ENCODE measurements at regions of chr1 and their contacts with region 1.

Region 1: DNA sequence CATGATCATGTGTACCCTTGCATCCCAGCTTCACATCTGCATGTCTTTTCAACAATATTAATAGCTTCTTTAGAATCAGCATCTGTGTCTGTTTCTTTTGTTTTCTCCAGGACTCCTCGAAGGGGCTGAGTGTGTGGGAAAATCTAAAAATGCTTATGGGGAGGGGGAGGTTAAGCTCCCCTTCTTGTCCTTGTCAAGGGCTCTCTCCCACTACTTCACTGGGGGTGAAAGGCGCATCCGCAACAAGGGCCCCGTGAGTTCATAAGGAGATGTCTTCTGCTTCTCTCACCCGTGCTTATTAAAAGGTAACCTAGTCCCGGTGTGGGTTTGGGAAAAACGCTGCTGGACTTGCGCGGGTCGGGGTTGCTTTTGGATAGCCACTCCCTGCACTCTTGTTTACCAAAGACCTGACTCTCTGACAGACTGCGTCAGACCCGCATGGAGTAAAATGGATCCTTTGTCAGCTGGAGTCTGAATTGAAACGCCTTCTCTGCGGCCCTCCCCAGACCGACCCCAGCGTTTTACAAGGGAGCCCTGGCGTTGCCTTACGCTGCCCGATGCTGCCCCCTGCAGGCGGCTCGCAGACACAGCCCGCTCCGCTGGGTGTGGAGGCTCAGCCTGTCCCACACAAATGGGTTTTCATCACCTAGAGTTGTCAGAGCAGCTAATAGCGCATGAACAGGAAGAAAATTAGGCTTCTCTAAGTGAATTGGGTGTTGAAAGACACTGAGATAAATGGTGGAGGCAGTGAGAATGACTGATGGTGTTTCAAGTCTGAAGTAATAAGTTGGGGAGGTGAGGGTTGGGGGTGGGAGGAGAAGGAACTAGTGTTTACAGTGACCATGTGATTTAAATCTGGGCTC is 53.8 kb downstream of the IER5 start:
- DNase-seq: peak; percentile 85 to 98 (median 90)
- ATAC-seq: peak; percentile 98
- H3K4me3 ChIP-seq: peak overlapping the region in 1 of 2 donors; percentile 4
- H3K27ac ChIP-seq: peak overlapping the region in 1 of 2 donors; percentile 75
- H3K4me1 ChIP-seq: peaks cover 16 to 41% of the 10 kb centered on the region in 2 donors
- H3K27me3 ChIP-seq: no peaks in the 10 kb centered on the region
- CTCF ChIP-seq: peak; percentile 96 to 98

Region 2: DNA sequence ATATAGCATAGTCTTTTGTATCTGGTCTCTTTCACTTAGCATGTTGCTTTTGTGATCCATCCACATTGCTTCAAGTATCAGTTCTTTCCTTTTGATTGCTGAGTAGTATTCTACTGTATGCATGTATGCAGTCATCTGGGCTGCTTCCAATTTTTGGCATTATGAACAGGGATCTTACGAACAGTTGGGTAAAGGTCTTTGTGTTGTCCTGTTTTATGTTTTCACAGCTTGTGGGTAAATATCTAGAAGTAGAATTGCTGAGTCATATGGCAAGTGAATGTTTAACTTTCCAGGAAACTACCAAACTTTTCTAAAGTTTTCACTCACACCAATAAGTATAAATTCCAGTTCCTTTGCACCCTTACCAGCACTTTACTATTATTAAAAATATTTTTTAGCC is 851.3 kb before region 1 on chr1:
- intact Hi-C with region 1: no loop called
- DNase-seq: no peak
- ATAC-seq: no peak
- H3K4me3 ChIP-seq: no peak overlapping the region
- H3K27ac ChIP-seq: peak overlapping the region in 1 of 2 donors; percentile 4
- H3K4me1 ChIP-seq: peaks cover 0 to 3% of the 10 kb centered on the region in 2 donors
- H3K27me3 ChIP-seq: no peaks in the 10 kb centered on the region
- CTCF ChIP-seq: no peak

Region 3: DNA sequence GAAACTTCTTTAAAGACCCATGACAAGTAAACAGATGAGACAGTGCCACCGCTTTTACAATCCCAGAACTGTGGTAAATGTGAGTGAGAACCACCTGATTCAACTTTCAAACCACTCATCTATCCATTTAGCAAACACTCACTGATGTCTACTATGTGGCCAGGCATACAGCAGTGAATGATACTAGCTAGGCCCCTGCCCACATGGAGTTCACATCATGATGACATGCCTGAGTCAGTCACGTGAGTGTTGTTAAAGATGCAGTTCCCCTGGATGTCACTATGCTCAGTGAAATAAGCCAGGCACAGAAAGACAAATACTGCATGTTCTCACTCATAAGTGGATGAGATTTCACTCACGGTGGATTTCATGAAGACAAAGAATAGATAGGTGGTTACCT is 148.1 kb before region 1 on chr1:
- intact Hi-C with region 1: no loop called
- DNase-seq: no peak
- ATAC-seq: peak; percentile 57
- H3K4me3 ChIP-seq: no peak overlapping the region
- H3K27ac ChIP-seq: no peak overlapping the region
- H3K4me1 ChIP-seq: peaks cover 0 to 4% of the 10 kb centered on the region in 2 donors
- H3K27me3 ChIP-seq: no peaks in the 10 kb centered on the region
- CTCF ChIP-seq: no peak

Region 4: GRCh38 chr1:181044449-181044966 is 97.8 kb before region 1 on chr1:
- intact Hi-C with region 1: loop called in 1 of 2 experiments (anchors 10 kb)
- DNase-seq: peak in 3 of 4 donors; percentile 33 to 88 (median 83)
- ATAC-seq: peak; percentile 83
- H3K4me3 ChIP-seq: no peak overlapping the region
- H3K27ac ChIP-seq: peak overlapping the region; percentile 71 to 77
- H3K4me1 ChIP-seq: peaks cover 9 to 53% of the 10 kb centered on the region in 2 donors
- H3K27me3 ChIP-seq: no peaks in the 10 kb centered on the region
- CTCF ChIP-seq: no peak

Region 5: DNA sequence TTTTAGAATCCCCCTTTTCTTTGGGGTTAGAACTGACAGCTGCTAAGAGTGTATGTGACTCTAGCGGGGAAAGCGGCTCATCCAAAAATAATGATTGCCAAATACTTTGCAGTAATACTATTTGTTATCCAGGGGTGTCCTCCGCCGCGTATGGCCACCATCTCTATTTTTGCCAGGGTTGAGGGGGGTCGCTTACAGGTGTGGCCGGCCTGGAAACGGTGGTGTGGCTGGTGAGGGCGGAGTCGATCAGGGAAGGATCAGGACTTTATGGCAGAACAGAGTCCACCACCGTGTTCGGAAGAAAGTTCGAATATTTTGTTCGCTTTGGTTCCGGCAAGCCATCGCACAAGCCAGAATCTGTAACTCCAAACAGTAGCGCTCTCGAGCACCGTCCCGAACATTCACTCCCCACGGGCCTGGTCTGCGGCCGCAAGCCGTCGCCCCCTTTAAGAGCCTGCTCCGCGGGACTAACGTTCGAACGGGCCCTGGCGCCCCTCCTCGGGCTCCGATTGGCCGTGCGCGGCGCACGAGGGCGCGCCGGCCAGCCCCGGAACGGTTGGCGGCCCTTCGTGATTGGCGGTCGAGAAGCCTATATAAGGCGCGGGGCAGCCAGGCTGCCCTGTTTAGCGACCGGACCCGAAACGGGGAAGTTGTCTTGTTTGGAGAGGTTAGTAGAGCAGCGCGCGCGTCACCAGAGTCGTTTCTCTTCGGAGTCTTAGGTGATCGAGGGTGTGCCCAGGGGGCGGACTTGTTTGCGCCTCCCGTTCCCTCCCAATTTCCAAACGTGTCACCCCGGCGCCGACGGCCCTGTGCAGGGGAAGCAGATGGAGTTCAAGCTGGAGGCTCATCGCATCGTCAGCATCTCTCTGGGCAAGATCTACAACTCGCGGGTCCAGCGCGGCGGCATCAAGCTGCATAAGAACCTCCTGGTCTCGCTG is 54.0 kb before region 1 on chr1 and contains the start of gene IER5:
- intact Hi-C with region 1: loop called in 1 of 2 experiments (anchors 5 kb)
- DNase-seq: peak; percentile 95 to 97 (median 96)
- ATAC-seq: peak; percentile 87
- H3K4me3 ChIP-seq: peak within 1 kb of the TSS; percentile 83 to 98
- H3K27ac ChIP-seq: peak within 1 kb of the TSS; percentile 91
- H3K4me1 ChIP-seq: peaks cover 8 to 59% of the 10 kb centered on the region in 2 donors
- H3K27me3 ChIP-seq: no peaks in the 10 kb centered on the region
- CTCF ChIP-seq: no peak
- polyA plus RNA-seq, gene IER5: 5.3 to 11.1 (median 10.1) TPM